ENCODE measurements at regions of chr1 and their contacts with region 1.

Region 1: DNA sequence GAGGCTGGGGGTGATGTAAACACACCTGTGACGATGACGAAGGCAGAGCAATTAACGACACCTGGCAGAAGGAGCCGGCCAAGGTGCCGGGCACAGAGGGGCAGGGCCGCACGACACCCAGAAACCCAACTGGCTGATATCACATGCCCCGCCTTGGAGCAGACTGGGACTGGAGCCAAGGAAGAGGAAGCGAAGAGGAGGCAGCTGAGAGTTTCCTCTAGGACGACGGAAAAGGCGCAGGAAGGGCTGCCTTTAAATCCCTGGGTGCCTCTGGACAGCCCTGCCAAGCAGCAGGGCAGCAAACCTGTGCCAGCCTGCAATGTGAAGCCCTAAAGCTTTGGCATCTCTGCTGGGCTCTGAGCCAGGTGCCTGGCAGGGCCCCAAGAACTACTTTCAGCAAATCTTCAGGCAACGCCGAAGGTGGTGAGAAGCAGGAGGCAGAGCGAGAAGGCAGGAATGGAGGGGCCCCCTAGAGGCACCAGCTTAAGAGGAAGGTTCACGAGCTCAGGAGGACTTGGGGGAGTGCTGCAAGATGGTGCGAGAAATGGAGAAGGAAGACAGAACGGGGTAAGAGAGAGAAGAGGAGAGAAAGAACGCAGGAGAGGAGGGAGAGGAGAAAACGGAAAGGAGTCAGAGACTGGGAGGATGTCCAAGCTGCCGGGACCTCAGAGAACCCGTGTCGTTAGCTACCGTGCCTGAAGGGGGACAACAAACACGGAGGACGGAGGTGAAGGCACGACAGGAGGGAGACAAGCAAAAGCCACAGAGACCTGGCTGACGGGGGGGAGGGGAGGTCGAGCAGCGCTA is 25.3 kb upstream of the PEF1 start:
- DNase-seq: peak; percentile 66 to 70
- H3K4me3 ChIP-seq: peak overlapping the region; percentile 10 to 12
- H3K27ac ChIP-seq: peak overlapping the region; percentile 55 to 68
- H3K4me1 ChIP-seq: peaks cover 8 to 20% of the 10 kb centered on the region in 2 donors
- H3K27me3 ChIP-seq: no peaks in the 10 kb centered on the region
- CTCF ChIP-seq: peak in 2 of 4 experiments; percentile 6 to 40
- POLR2A ChIP-seq: peak in 1 of 2 donors; percentile 21

Region 2: DNA sequence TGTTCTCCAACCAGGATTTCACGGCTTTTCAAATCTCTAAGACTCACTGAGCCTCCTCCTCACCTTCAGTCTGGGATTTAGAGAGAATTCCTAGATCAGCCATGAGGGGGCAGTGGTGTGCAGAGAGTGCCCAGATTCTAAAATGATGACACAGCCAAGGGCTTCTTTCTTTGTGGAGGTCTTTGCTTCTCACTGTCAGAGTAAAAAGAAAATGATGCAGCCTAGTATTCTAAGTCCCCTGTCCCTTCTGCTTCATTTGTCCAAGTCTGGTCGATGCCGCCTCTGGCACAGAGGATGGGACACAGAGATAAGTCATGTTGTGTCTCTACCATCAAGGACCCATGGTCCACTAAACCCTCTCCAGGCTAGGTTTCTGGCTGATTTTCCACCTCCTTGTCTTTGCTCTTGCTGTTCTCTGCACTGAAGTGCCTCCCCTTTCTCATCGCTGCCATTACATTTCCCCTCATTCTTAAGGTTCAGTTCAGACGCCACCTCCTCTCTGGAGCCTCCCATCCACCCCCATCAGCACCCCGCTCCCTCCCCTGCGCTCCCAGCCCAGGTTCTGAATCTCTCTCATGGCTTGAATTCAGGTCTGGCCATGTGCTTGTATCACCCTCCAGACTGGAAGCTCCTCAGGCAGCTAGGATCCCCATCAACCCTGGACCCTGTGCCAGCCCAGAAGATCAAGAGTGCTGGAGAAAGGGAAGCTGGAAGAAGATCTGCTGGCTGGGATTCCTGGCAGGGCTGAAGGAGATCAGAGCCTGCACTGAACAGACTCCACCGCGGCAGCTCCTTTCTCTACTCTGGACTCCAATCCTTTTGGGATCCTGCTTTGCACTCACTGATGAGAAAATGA is 105.6 kb before region 1 on chr1:
- intact Hi-C with region 1: no loop called
- DNase-seq: peak; percentile 61 to 63
- H3K4me3 ChIP-seq: no peak overlapping the region
- H3K27ac ChIP-seq: peak overlapping the region; percentile 3 to 50
- H3K4me1 ChIP-seq: peaks cover 0 to 5% of the 10 kb centered on the region in 2 donors
- H3K27me3 ChIP-seq: no peaks in the 10 kb centered on the region
- CTCF ChIP-seq: peak; percentile 86 to 94 (median 90)
- POLR2A ChIP-seq: no peak

Region 3: GRCh38 chr1:31789259-31790065 is 119.5 kb after region 1 on chr1:
- intact Hi-C with region 1: loop called (anchors 5 kb)
- DNase-seq: peak; percentile 96
- H3K4me3 ChIP-seq: peak overlapping the region; percentile 54 to 57
- H3K27ac ChIP-seq: peak overlapping the region; percentile 80 to 87
- H3K4me1 ChIP-seq: no peaks in the 10 kb centered on the region
- H3K27me3 ChIP-seq: no peaks in the 10 kb centered on the region
- CTCF ChIP-seq: peak; percentile 95 to 99 (median 99)
- POLR2A ChIP-seq: no peak